WTC11 (cell line): ENCODE measurements at regions of chr3 and their contacts with region 1.

Region 1: GRCh38 chr3:34683851-34684250 is 885.4 kb downstream of the PDCD6IP start:
- DNase-seq: peak; percentile 82
- ATAC-seq: peak; percentile 82
- H3K4me3 Mint-ChIP-seq: no peak overlapping the region
- H3K27ac Mint-ChIP-seq: no peak overlapping the region
- H3K4me1 Mint-ChIP-seq: no peaks in the 10 kb centered on the region
- H3K27me3 Mint-ChIP-seq: no peaks in the 10 kb centered on the region; the same call in 1 of the 2 replicates
- CTCF ChIP-seq: peak; percentile 44

Region 2: GRCh38 chr3:34619990-34620389 is 63.9 kb before region 1 on chr3:
- CTCF ChIA-PET with region 1: interaction called, 19 read pairs
- POLR2A ChIA-PET with region 1: no interaction called
- DNase-seq: no peak
- ATAC-seq: peak; percentile 88
- H3K4me3 Mint-ChIP-seq: no peak overlapping the region
- H3K27ac Mint-ChIP-seq: no peak overlapping the region
- H3K4me1 Mint-ChIP-seq: no peaks in the 10 kb centered on the region
- H3K27me3 Mint-ChIP-seq: no peaks in the 10 kb centered on the region
- CTCF ChIP-seq: no peak